Pancreas (tissue), 10 donors: ENCODE measurements at regions of chr6 and their contacts with region 1.

Region 1: DNA sequence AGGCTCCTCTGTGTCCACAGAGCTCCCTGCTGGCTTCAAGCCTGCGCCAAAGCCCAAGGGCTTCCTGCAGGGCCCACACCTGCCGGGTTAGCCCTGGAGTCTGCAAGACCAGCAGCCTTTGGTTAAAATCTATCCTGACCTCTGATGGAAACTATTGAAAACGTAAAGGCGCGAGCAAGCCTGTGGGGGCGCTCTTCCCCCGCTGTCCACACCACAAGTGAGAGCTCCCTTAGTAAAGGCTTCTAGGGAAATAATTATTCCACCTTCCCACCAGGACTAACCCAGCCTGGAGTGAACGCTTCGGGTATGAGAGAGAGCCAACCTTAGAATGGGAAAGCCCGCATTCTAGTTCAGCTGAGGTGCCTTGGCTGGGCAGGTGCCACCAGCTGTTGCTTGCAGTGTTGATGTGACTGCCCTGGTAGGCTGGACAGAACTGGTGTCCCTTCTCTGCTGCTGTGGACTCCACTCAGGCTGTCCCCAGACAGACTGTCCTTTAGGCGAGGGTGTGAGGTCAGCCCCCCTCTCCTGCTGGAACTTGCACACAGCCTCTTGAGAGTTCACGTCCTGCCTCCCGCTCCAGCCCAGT is 68.7 kb downstream of the SYTL3 start:
- DNase-seq: peak in 5 of 6 donors; percentile 54 to 76 (median 67)
- ATAC-seq: peak; percentile 87 to 93 (median 92)
- H3K4me3 ChIP-seq: no peak overlapping the region
- H3K27ac ChIP-seq: no peak overlapping the region
- H3K4me1 ChIP-seq: no peaks in the 10 kb centered on the region
- H3K27me3 ChIP-seq: no peaks in the 10 kb centered on the region
- CTCF ChIP-seq: peak; percentile 49 to 73 (median 68)

Region 2: DNA sequence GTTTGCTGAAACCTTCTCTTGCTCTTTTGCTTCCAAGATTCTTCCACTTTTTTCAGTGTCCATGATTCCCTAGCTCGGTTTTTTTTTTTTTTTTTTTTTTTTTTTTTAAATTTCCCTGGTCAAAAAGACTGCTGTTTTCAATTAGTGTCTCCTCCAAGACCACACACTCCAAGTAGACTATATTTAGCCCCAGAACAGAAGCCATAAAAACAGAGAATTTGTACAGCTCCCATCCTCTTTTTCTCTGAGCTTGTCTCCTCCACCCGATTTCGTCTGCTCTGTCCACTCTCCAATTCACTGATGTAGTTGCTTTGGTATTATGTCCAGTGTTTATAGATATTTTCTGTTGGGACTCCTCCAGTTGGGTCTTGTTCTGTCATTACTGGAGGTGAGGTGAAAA is 243.8 kb after region 1 on chr6:
- intact Hi-C with region 1: loop called in 2 of 3 experiments (anchors 5 kb)
- DNase-seq: no peak
- ATAC-seq: no peak
- H3K4me3 ChIP-seq: no peak overlapping the region
- H3K27ac ChIP-seq: no peak overlapping the region
- H3K4me1 ChIP-seq: peaks cover 0 to 4% (median 0%) of the 10 kb centered on the region in 3 donors
- H3K27me3 ChIP-seq: no peaks in the 10 kb centered on the region
- CTCF ChIP-seq: no peak

Region 3: DNA sequence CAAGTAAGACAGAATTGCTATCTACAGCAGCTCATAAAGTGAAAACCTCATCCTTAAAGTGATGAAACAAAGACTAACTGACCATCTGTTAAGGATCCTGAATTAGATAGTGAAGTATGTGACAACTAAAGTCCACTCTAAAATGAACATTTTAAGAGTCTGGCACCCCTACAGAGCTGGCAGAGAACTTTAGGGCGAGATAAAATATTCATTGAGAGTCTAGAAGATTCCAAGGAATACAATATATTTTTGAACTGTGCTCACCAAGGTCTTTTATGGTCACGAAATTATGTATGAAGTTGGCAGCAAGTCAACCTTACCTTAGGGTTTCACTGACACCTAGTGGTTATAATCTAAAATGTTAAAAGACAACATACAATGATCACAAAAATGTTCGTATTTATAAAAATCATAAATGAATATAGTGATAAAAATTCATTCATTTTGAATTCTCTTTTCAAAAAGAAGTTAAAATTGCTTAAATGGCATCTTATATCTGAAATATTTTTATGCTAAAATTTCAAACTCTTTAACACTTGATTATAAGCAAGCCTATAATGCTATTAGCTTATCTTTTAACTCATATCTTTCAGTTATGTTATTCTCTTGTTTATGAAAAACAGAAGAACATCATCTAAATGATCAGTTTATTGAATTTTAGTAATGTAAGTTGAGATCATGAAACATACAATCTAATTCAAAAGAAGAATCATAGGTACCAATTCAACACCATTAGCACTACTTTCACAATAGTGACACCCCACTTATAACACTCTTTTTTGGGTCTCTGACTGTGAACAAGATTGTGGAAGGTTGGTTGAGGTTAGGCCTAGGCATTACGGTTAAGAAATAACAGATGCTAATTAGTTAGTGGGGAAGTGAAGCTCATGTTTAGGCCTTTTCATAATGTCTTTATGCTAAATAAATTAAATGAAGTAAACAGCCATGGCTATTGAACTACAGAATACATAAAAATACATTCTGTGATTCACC is 254.0 kb after region 1 on chr6:
- intact Hi-C with region 1: loop called in 2 of 3 experiments (anchors 5 to 10 kb)
- DNase-seq: peak in 1 of 6 donors; percentile 6
- ATAC-seq: peak; percentile 70 to 91 (median 87)
- H3K4me3 ChIP-seq: no peak overlapping the region
- H3K27ac ChIP-seq: no peak overlapping the region
- H3K4me1 ChIP-seq: no peaks in the 10 kb centered on the region
- H3K27me3 ChIP-seq: no peaks in the 10 kb centered on the region
- CTCF ChIP-seq: peak in 3 of 4 donors; percentile 21 to 37 (median 33)